ENCODE measurements at regions of chr11 and their contacts with region 1.

Region 1: DNA sequence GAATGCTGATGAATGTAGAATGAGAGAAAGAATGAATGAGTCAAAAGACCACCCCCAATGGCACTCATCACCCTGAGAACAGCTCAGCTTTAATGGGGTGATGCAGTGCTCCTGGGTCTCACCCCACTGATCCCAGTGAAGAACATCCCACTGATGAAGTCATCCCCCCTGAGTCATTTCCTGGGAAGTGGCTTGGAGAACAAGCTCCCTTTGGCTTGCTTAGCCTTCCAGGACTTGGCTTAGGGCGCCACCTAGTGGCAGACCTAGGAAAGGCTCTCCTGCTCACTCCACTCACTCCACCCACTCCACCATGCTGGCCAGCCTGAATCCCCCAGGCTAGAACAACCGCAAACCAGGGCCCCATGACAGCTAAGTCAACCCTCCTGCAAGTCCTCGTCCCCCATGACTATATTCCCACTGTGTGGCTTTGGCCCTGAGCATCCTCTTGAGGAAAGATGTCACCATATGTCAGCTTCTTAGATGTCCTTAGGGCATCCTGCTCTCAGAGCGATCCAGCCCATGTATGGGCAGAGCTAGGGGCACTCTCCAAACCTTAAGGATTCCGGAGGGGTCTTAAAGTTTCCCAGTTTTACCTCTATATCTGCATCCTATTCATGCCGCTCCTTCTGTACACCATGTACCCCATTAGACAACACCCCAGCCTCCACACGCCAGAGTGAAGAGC is 17.8 kb upstream of the TMPRSS13 start:
- DNase-seq: peak; percentile 57 to 86 (median 76)
- ATAC-seq: peak; percentile 64
- H3K4me3 ChIP-seq: no peak overlapping the region
- H3K4me3 Mint-ChIP-seq: peak overlapping the region in 9 of 10 donors; percentile 1 to 79 (median 58)
- H3K27ac ChIP-seq: no peak overlapping the region
- H3K27ac Mint-ChIP-seq: peak overlapping the region; percentile 30 to 91 (median 82)
- H3K4me1 ChIP-seq: peaks cover 49 to 51% of the 10 kb centered on the region in 2 donors
- H3K4me1 Mint-ChIP-seq: peaks cover 50 to 83% (median 60%) of the 10 kb centered on the region in 7 donors
- H3K27me3 ChIP-seq: no peaks in the 10 kb centered on the region
- H3K27me3 Mint-ChIP-seq: no peaks in the 10 kb centered on the region

Region 2: DNA sequence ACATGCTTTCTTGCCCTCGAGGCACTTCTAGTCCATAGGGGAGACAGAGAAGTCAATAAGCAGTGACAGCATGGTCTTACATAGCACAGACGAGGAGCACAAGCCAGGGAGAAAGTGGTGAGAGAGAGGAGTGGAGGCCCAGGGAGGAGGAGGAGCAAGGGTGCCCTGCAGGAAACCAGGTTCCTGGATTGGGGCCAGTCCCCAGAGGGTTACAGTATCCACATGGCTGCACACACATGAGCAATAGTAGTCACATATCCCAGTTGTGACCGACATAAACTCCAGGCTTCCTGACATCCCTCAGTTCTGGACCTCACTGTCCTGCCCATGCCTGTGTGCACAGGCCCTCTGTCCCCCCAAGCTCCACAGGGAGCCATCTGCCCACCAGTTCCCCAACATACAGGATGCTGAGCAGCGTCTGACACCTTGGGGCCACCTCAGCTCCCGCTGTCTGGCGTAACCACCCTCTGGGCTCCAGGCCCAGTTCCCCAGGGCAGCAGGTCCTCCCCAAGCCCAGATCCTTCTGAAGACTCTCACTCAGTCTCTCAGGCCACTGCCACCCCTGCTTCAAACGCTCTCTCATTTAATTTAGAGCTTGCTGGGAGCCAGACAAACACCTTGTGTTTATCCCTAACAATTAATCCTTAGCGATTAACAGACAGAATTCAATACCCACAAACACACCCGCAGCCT is 203.7 kb before region 1 on chr11:
- CTCF ChIA-PET with region 1: no interaction called
- POLR2A ChIA-PET with region 1: no interaction called
- intact Hi-C with region 1: no loop called
- DNase-seq: no peak
- ATAC-seq: no peak
- H3K4me3 ChIP-seq: no peak overlapping the region
- H3K4me3 Mint-ChIP-seq: no peak overlapping the region
- H3K27ac ChIP-seq: no peak overlapping the region
- H3K27ac Mint-ChIP-seq: no peak overlapping the region
- H3K4me1 ChIP-seq: peaks cover 0 to 5% of the 10 kb centered on the region in 2 donors
- H3K4me1 Mint-ChIP-seq: peaks cover 0 to 3% (median 0%) of the 10 kb centered on the region in 7 donors
- H3K27me3 ChIP-seq: no peaks in the 10 kb centered on the region
- H3K27me3 Mint-ChIP-seq: peaks cover 14 to 34% (median 17%) of the 10 kb centered on the region in 5 donors

Region 3: GRCh38 chr11:117807482-117808327 is 139.3 kb before region 1 on chr11:
- CTCF ChIA-PET with region 1: interaction called, 58 read pairs
- POLR2A ChIA-PET with region 1: interaction called, 8 read pairs
- intact Hi-C with region 1: loop called (anchors 1 kb)
- DNase-seq: peak in 8 of 9 donors; percentile 54 to 76 (median 62)
- ATAC-seq: peak; percentile 76
- H3K4me3 ChIP-seq: no peak overlapping the region
- H3K4me3 Mint-ChIP-seq: peak overlapping the region in 1 of 10 donors; percentile 4
- H3K27ac ChIP-seq: no peak overlapping the region
- H3K27ac Mint-ChIP-seq: peak overlapping the region in 2 of 9 donors; percentile 33 to 64
- H3K4me1 ChIP-seq: peaks cover 0 to 4% of the 10 kb centered on the region in 2 donors
- H3K4me1 Mint-ChIP-seq: peaks cover 6 to 19% (median 9%) of the 10 kb centered on the region in 7 donors
- H3K27me3 ChIP-seq: no peaks in the 10 kb centered on the region
- H3K27me3 Mint-ChIP-seq: peaks cover 0 to 3% (median 0%) of the 10 kb centered on the region in 5 donors

Region 4: DNA sequence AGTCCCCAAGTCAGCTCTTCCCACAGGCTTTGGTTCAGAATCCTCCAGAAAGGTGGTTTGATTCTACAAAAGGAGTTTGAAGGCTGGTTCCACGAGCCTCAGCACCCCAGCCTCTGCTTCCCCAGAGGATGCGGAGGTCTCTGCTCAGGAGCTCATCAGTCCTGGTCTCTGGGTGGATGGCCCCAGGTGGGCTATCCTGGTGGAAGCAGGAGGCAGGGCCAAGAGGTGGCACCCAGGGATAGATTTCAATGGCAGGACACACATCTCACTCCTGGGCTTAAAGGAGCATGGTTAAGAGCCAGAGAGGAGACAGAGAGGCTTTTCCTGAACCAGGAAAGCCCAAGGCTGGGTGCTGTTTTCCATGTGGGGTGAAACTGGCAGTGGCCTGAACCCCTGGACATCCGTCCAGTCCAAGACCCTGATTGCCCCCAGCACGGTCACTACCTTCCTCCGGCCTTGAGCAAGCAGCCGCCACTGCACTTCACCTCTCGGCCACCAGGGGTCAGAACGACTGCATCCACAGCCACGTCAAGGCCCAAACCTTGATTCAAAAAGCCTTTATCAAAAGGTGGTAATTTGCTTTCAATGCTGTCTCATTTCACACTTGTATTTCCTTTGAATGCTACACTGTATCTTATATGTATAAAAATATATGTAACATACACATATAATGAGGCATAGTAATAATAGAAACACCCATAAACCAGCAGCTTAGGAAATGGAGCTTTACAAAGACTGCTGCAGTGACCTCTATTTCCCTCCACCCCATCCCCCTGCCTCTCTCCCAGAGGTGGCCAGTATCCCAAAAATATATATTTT is 103.1 kb before region 1 on chr11:
- CTCF ChIA-PET with region 1: interaction called, 76 read pairs
- POLR2A ChIA-PET with region 1: interaction called, 10 read pairs
- intact Hi-C with region 1: loop called (anchors 1 kb)
- DNase-seq: peak; percentile 63 to 84 (median 72)
- ATAC-seq: peak; percentile 78
- H3K4me3 ChIP-seq: no peak overlapping the region
- H3K4me3 Mint-ChIP-seq: no peak overlapping the region
- H3K27ac ChIP-seq: no peak overlapping the region
- H3K27ac Mint-ChIP-seq: peak overlapping the region in 2 of 9 donors; percentile 46 to 51
- H3K4me1 ChIP-seq: peaks cover 6 to 9% of the 10 kb centered on the region in 2 donors
- H3K4me1 Mint-ChIP-seq: peaks cover 0 to 10% (median 0%) of the 10 kb centered on the region in 7 donors
- H3K27me3 ChIP-seq: no peaks in the 10 kb centered on the region
- H3K27me3 Mint-ChIP-seq: peaks cover 0 to 32% (median 0%) of the 10 kb centered on the region in 5 donors

Region 5: GRCh38 chr11:117970400-117971024 is 23.5 kb after region 1 on chr11:
- CTCF ChIA-PET with region 1: interaction called, 8 read pairs
- POLR2A ChIA-PET with region 1: interaction called, 302 read pairs
- intact Hi-C with region 1: loop called in 1 of 2 experiments (anchors 1 kb)
- DNase-seq: peak in 1 of 9 donors; percentile 8
- ATAC-seq: peak; percentile 85
- H3K4me3 ChIP-seq: peak overlapping the region; percentile 31
- H3K4me3 Mint-ChIP-seq: peak overlapping the region in 9 of 10 donors; percentile 26 to 80 (median 50)
- H3K27ac ChIP-seq: no peak overlapping the region
- H3K27ac Mint-ChIP-seq: peak overlapping the region in 8 of 9 donors; percentile 7 to 76 (median 20)
- H3K4me1 ChIP-seq: peaks cover 48 to 50% of the 10 kb centered on the region in 2 donors
- H3K4me1 Mint-ChIP-seq: peaks cover 38 to 71% (median 65%) of the 10 kb centered on the region in 7 donors
- H3K27me3 ChIP-seq: no peaks in the 10 kb centered on the region
- H3K27me3 Mint-ChIP-seq: no peaks in the 10 kb centered on the region

Region 6: GRCh38 chr11:117993988-117994745 is 47.2 kb after region 1 on chr11:
- CTCF ChIA-PET with region 1: interaction called, 70 read pairs
- POLR2A ChIA-PET with region 1: interaction called, 302 read pairs
- intact Hi-C with region 1: no loop called
- DNase-seq: no peak
- ATAC-seq: peak; percentile 14
- H3K4me3 ChIP-seq: no peak overlapping the region
- H3K4me3 Mint-ChIP-seq: peak overlapping the region in 3 of 10 donors; percentile 40 to 80 (median 55)
- H3K27ac ChIP-seq: peak overlapping the region; percentile 51
- H3K27ac Mint-ChIP-seq: peak overlapping the region; percentile 40 to 92 (median 78)
- H3K4me1 ChIP-seq: peaks cover 55 to 89% of the 10 kb centered on the region in 2 donors
- H3K4me1 Mint-ChIP-seq: peaks cover 50 to 91% (median 63%) of the 10 kb centered on the region in 7 donors
- H3K27me3 ChIP-seq: no peaks in the 10 kb centered on the region
- H3K27me3 Mint-ChIP-seq: no peaks in the 10 kb centered on the region

Region 7: GRCh38 chr11:118027691-118028090 is 80.7 kb after region 1 on chr11:
- CTCF ChIA-PET with region 1: interaction called, 5 read pairs
- POLR2A ChIA-PET with region 1: no interaction called
- intact Hi-C with region 1: loop called in 1 of 2 experiments (anchors 1 kb)
- DNase-seq: no peak
- ATAC-seq: no peak
- H3K4me3 ChIP-seq: no peak overlapping the region
- H3K4me3 Mint-ChIP-seq: no peak overlapping the region
- H3K27ac ChIP-seq: no peak overlapping the region
- H3K27ac Mint-ChIP-seq: no peak overlapping the region
- H3K4me1 ChIP-seq: peaks cover 0 to 3% of the 10 kb centered on the region in 2 donors
- H3K4me1 Mint-ChIP-seq: peaks cover 7 to 29% (median 21%) of the 10 kb centered on the region in 7 donors
- H3K27me3 ChIP-seq: no peaks in the 10 kb centered on the region
- H3K27me3 Mint-ChIP-seq: peaks cover 0 to 4% (median 0%) of the 10 kb centered on the region in 5 donors

Region 8: GRCh38 chr11:118058311-118059245 is 111.6 kb after region 1 on chr11:
- CTCF ChIA-PET with region 1: interaction called, 125 read pairs
- POLR2A ChIA-PET with region 1: interaction called, 146 read pairs
- intact Hi-C with region 1: loop called in 1 of 2 experiments (anchors 1 kb)
- DNase-seq: no peak
- ATAC-seq: peak; percentile 16
- H3K4me3 ChIP-seq: no peak overlapping the region
- H3K4me3 Mint-ChIP-seq: no peak overlapping the region
- H3K27ac ChIP-seq: no peak overlapping the region
- H3K27ac Mint-ChIP-seq: peak overlapping the region in 1 of 9 donors; percentile 72
- H3K4me1 ChIP-seq: peaks cover 0 to 8% of the 10 kb centered on the region in 2 donors
- H3K4me1 Mint-ChIP-seq: peaks cover 0 to 8% (median under 1%) of the 10 kb centered on the region in 7 donors
- H3K27me3 ChIP-seq: no peaks in the 10 kb centered on the region
- H3K27me3 Mint-ChIP-seq: peaks cover 0 to 10% (median 0%) of the 10 kb centered on the region in 5 donors